Naive thymus-derived CD4-positive, alpha-beta T cell (primary cell): ENCODE measurements at regions of chr1 and their contacts with region 1.

Region 1: GRCh38 chr1:231211005-231211857 is 29.8 kb upstream of the GNPAT start:
- DNase-seq: peak; percentile 78 to 91 (median 86)
- ATAC-seq: peak; percentile 94
- H3K4me3 ChIP-seq: peak overlapping the region; percentile 56
- H3K4me3 Mint-ChIP-seq: peak overlapping the region; percentile 29 to 95 (median 90)
- H3K27ac ChIP-seq: peak overlapping the region; percentile 14
- H3K27ac Mint-ChIP-seq: peak overlapping the region; percentile 22 to 90 (median 80)
- H3K4me1 ChIP-seq: peaks cover 4% of the 10 kb centered on the region in 2 donors
- H3K4me1 Mint-ChIP-seq: peaks cover 0 to 12% (median 9%) of the 10 kb centered on the region in 7 donors
- H3K27me3 ChIP-seq: no peaks in the 10 kb centered on the region
- H3K27me3 Mint-ChIP-seq: peaks cover 0 to 5% (median 0%) of the 10 kb centered on the region in 5 donors

Region 2: DNA sequence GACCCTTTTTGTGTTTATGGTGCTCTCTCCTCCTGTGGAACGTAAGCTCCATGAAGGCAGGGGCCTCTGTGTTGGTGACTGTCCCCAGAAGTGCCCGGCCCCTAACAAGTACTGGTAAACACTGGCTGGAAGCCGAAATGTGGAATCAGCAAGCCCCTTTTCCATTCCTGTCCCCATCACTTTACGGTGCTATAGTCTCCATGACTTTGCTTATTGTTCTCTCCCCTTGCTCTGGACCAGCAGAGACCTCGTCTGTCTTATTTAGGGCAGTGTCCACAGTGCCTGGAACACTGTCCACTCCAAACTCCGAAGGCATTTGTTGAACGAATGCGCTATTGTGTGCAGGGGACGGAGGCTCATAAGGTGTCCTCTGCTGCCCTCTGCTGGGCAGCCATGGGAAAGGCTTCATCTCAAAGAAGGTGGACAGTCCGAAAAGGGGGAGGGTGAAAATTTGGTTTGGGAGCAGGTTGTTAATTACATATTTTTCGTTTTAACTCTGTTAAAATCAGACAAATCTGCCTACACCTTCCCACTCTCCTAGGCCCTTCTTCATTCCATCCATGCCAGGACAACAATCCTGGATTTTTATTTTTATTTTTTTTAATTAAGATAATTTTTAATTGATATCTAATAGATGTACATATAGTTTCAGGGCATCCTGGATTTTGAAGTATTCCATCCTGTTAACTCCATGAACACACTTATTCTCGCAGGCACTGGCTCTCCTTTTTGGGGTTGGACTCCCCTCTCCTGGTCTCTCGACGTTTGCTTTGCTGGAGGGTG is 900.7 kb before region 1 on chr1:
- CTCF ChIA-PET with region 1: no interaction called
- POLR2A ChIA-PET with region 1: no interaction called
- intact Hi-C with region 1: loop called in 1 of 2 experiments (anchors 5 kb)
- DNase-seq: peak; percentile 25 to 70 (median 54)
- ATAC-seq: peak; percentile 87
- H3K4me3 ChIP-seq: no peak overlapping the region
- H3K4me3 Mint-ChIP-seq: peak overlapping the region in 2 of 10 donors; percentile 6 to 30
- H3K27ac ChIP-seq: no peak overlapping the region
- H3K27ac Mint-ChIP-seq: no peak overlapping the region
- H3K4me1 ChIP-seq: peaks cover 3% of the 10 kb centered on the region in 2 donors
- H3K4me1 Mint-ChIP-seq: peaks cover 4 to 10% (median 4%) of the 10 kb centered on the region in 7 donors
- H3K27me3 ChIP-seq: no peaks in the 10 kb centered on the region
- H3K27me3 Mint-ChIP-seq: peaks cover 5 to 19% (median 10%) of the 10 kb centered on the region in 5 donors

Region 3: DNA sequence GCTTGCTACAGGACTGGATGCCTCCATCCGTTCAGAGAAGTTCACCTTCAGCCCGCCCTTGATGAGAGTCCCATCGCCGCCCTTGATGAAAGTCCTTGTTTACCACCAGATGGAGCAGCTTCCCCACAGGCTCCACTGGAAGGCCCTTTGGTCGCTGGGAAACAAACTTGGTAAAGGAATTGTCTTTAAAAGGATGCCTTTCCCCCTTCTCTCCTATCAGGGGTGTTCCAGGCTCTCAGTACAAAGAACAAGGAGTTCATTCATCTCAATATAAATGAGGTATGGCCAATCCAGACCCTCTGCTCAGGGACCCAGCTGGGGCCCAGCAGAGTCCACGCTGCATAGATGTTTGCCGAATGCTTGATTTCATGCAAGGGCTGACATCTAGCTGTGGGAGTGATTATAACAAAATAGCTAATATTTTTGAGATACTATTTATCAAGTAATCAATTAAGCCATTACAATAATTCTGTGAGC is 413.3 kb before region 1 on chr1:
- CTCF ChIA-PET with region 1: no interaction called
- POLR2A ChIA-PET with region 1: no interaction called
- intact Hi-C with region 1: loop called in 1 of 2 experiments (anchors 1 kb)
- DNase-seq: peak in 1 of 9 donors; percentile 2
- ATAC-seq: no peak
- H3K4me3 ChIP-seq: no peak overlapping the region
- H3K4me3 Mint-ChIP-seq: no peak overlapping the region
- H3K27ac ChIP-seq: no peak overlapping the region
- H3K27ac Mint-ChIP-seq: no peak overlapping the region
- H3K4me1 ChIP-seq: no peaks in the 10 kb centered on the region
- H3K4me1 Mint-ChIP-seq: no peaks in the 10 kb centered on the region
- H3K27me3 ChIP-seq: no peaks in the 10 kb centered on the region
- H3K27me3 Mint-ChIP-seq: peaks cover 4 to 42% (median 16%) of the 10 kb centered on the region in 5 donors

Region 4: GRCh38 chr1:230917284-230918135 is 293.7 kb before region 1 on chr1:
- CTCF ChIA-PET with region 1: interaction called, 10 read pairs
- POLR2A ChIA-PET with region 1: no interaction called
- intact Hi-C with region 1: loop called (anchors 1 kb)
- DNase-seq: peak; percentile 33 to 74 (median 67)
- ATAC-seq: peak; percentile 81
- H3K4me3 ChIP-seq: no peak overlapping the region
- H3K4me3 Mint-ChIP-seq: no peak overlapping the region
- H3K27ac ChIP-seq: no peak overlapping the region
- H3K27ac Mint-ChIP-seq: peak overlapping the region in 5 of 9 donors; percentile 17 to 32 (median 24)
- H3K4me1 ChIP-seq: no peaks in the 10 kb centered on the region
- H3K4me1 Mint-ChIP-seq: peaks cover 0 to 11% (median 0%) of the 10 kb centered on the region in 7 donors
- H3K27me3 ChIP-seq: no peaks in the 10 kb centered on the region
- H3K27me3 Mint-ChIP-seq: no peaks in the 10 kb centered on the region

Region 5: DNA sequence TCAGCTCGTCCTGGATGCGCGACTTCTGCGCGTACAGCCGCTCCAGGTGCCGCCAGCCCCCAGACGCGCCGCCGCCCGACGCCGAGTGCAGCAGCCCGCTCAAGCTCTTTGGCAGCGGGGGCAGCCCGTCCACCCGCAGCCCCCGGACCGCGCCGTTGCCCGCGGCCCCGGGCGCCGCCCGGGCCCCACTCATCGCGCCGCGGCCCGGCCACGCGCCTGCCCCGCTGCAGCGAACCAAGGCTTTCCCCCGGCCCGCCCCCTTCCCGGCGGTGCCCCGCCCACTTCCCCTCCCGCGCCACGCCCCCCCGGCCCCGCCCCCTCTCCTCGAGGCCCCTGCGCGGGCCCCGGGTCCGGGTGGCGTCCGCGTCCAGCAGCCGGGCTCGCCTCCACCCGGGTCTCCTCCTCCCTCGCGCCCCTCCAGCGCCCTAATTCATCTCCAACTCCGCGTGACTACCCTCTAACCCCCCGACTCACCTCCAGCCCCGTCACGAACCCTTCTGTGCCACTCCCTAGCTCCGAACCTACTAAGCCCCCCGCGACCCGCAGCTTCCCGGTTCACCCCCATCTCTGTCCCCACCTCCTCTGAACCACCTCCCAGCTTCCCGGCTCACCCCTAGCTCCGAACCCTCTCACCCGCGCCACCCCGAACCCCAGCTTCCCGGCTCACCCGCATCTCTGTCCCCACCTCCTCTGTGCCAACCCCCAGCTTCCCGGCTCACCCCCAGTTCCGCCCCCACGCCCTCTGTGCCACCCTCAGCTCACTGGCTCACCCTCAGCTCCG is 171.0 kb before region 1 on chr1 and contains the start of gene FAM89A:
- CTCF ChIA-PET with region 1: no interaction called
- POLR2A ChIA-PET with region 1: no interaction called
- intact Hi-C with region 1: loop called in 1 of 2 experiments (anchors 5 kb)
- DNase-seq: peak; percentile 44 to 79 (median 70)
- ATAC-seq: peak; percentile 91
- H3K4me3 ChIP-seq: peak within 1 kb of the TSS; percentile 67
- H3K4me3 Mint-ChIP-seq: peak within 1 kb of the TSS; percentile 81 to 90 (median 82)
- H3K27ac ChIP-seq: peak within 1 kb of the TSS; percentile 63
- H3K27ac Mint-ChIP-seq: peak within 1 kb of the TSS in 8 of 9 donors; percentile 36 to 83 (median 69)
- H3K4me1 ChIP-seq: peaks cover 10 to 13% of the 10 kb centered on the region in 2 donors
- H3K4me1 Mint-ChIP-seq: peaks cover 27 to 49% (median 36%) of the 10 kb centered on the region in 7 donors
- H3K27me3 ChIP-seq: no peaks in the 10 kb centered on the region
- H3K27me3 Mint-ChIP-seq: peaks cover 0 to 37% (median 0%) of the 10 kb centered on the region in 5 donors
- total RNA-seq, gene FAM89A: 4.5 to 9.0 (median 6.9) TPM